Activated T-helper 1 cell treated with anti-CD3 and anti-CD28 coated beads, Interleukin-12 subunit alpha, Interleukin-12 subunit beta, Interleukin-2, Interleukin-4 antibody, amounts not matched to agents 30 ng/mL and 10 ng/mL and 1 ng/mL, durations not matched to agents 14 hours and 24 hours and 36 hours (primary cell): ENCODE measurements at regions of chr5 and their contacts with region 1.

Region 1: DNA sequence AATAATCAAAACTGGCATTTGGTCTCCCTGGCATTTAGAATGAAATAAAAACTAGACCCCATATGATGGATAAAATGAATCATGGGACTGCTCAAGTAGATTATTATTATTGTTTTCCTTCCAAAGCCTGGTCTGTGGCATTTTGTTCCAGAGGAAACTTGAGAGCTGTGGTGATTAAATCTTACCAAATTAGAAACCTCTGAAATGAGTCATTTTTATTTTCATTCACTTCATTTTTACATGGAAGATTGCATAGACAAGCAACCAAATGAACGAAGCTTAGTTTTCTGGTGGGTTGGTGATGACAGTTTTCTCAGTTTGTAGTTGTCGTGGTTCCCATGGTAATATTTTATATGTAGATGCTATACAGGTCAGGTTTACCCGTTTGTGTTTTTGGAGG is 23.4 kb downstream of the PAM start:
- DNase-seq: no peak
- H3K4me3 Mint-ChIP-seq: peak overlapping the region; percentile 45
- H3K27ac Mint-ChIP-seq: peak overlapping the region; percentile 85
- H3K4me1 Mint-ChIP-seq: peaks cover 73% of the 10 kb centered on the region
- H3K27me3 Mint-ChIP-seq: no peaks in the 10 kb centered on the region

Region 2: DNA sequence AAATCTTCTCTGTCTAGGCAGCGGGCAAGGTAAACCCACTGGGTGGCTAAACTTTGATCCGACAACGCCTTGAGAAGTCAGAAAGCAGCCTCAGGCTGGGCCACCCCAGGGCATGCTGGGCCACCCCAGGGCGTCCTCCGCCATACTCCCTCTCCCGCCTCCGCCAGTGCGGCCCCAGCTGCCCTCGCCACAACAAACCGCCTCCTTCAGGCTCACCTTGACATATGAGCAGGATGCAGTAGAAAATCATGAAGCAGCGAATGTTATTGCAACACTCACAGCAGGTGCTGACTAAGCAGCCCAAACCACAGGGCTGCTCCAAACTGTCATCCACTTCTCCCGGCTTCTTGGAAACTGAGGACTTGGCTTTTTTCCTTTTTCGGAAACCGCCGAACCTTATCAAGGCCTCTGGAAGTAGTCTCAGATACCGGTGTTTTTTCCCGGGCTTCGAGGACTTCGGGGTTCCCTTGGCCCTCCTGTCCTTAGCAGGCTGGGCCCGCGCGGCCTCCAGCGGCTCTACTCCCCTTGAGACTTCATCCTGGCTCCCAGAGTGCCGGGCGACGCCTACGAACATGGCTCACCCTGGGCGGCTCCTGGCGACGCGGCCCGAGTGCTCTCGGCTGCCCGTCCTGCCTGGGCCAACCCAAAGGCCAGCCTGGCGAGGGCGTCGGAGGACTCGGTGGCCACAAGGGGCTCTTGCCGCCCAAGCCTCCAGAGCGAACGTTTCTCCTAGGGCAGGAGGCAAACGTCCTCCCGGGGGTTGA is 280.0 kb before region 1 on chr5 and contains the start of gene SLCO6A1:
- intact Hi-C with region 1: no loop called
- DNase-seq: no peak
- H3K4me3 Mint-ChIP-seq: no peak within 1 kb of the TSS
- H3K27ac Mint-ChIP-seq: no peak within 1 kb of the TSS
- H3K4me1 Mint-ChIP-seq: no peaks in the 10 kb centered on the region
- H3K27me3 Mint-ChIP-seq: no peaks in the 10 kb centered on the region
- total RNA-seq, gene SLCO6A1: not detected in 2 replicates

Region 3: GRCh38 chr5:102681407-102681983 is 97.0 kb before region 1 on chr5:
- intact Hi-C with region 1: loop called (anchors 2 kb)
- DNase-seq: peak; percentile 29
- H3K4me3 Mint-ChIP-seq: no peak overlapping the region
- H3K27ac Mint-ChIP-seq: no peak overlapping the region
- H3K4me1 Mint-ChIP-seq: no peaks in the 10 kb centered on the region
- H3K27me3 Mint-ChIP-seq: peaks cover 5% of the 10 kb centered on the region

Region 4: DNA sequence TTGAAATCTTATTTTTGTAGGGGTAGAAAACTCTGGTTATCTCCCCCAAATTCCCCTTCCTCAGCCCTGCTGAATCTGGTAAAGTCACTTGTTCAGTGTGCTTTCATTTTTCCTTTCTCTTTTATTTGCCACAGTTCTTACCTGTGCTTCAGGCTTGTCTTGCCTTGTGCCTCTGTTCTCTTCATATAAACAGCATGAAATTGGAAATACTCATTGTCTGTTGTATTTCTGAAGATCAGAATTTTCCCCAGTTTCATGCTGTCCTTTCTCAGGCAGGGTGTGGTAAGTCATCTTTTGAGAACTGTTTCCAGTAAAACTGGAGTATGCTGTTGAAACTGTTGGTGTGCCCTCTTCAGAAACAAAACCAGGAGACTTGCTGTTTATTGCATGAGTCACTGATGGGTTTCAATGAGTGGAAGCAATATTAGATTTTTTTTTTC is 16.4 kb before region 1 on chr5:
- intact Hi-C with region 1: loop called (anchors 1 kb)
- DNase-seq: no peak
- H3K4me3 Mint-ChIP-seq: peak overlapping the region; percentile 73
- H3K27ac Mint-ChIP-seq: peak overlapping the region; percentile 80
- H3K4me1 Mint-ChIP-seq: peaks cover 76% of the 10 kb centered on the region
- H3K27me3 Mint-ChIP-seq: no peaks in the 10 kb centered on the region

Region 5: DNA sequence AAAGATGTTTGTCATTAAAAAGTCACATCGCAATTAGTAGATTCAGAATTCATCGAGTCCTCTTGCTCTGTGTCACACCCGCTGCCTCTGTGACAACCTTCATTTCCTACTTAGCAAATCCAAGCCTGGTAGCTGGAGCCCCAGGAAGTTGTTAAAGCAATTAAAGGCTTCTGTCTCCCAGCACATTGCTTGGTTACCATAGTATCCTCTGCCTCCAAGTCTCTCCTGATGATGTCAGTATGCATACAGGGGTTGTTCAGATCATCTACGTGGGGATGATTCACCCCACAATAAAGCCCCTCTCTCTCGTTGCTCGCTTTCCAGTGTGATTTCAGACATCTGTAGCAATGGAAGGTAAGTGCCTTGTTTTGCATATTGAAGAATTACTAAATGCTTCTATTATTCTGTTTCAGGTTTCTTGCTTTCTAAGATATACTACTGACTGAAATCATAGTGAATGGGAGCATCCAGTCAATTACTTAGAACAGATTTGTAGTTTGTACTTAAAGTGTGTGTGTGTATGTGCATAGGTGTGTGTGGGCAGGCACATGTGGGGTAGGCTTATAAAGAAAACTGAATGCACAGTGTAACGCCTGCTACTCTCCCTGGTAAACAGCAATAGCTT is 29.5 kb after region 1 on chr5:
- intact Hi-C with region 1: no loop called
- DNase-seq: no peak
- H3K4me3 Mint-ChIP-seq: no peak overlapping the region
- H3K27ac Mint-ChIP-seq: no peak overlapping the region
- H3K4me1 Mint-ChIP-seq: peaks cover 4% of the 10 kb centered on the region
- H3K27me3 Mint-ChIP-seq: no peaks in the 10 kb centered on the region

Region 6: GRCh38 chr5:102865510-102866236 is 87.2 kb after region 1 on chr5:
- intact Hi-C with region 1: loop called (anchors 5 kb)
- DNase-seq: no peak
- H3K4me3 Mint-ChIP-seq: peak overlapping the region; percentile 69
- H3K27ac Mint-ChIP-seq: no peak overlapping the region
- H3K4me1 Mint-ChIP-seq: peaks cover 11% of the 10 kb centered on the region
- H3K27me3 Mint-ChIP-seq: peaks cover 16% of the 10 kb centered on the region

Region 7: GRCh38 chr5:103041071-103041676 is 262.7 kb after region 1 on chr5:
- intact Hi-C with region 1: loop called (anchors 2 kb)
- DNase-seq: no peak
- H3K4me3 Mint-ChIP-seq: no peak overlapping the region
- H3K27ac Mint-ChIP-seq: no peak overlapping the region
- H3K4me1 Mint-ChIP-seq: no peaks in the 10 kb centered on the region
- H3K27me3 Mint-ChIP-seq: peaks cover 14% of the 10 kb centered on the region

Region 8: GRCh38 chr5:103224118-103224893 is 445.8 kb after region 1 on chr5:
- intact Hi-C with region 1: loop called (anchors 10 kb)
- DNase-seq: peak; percentile 24
- H3K4me3 Mint-ChIP-seq: no peak overlapping the region
- H3K27ac Mint-ChIP-seq: no peak overlapping the region
- H3K4me1 Mint-ChIP-seq: no peaks in the 10 kb centered on the region
- H3K27me3 Mint-ChIP-seq: peaks cover 23% of the 10 kb centered on the region